PC-3 (cell line): ENCODE measurements at regions of chr2 and their contacts with region 1.

Region 1: GRCh38 chr2:169012812-169013627 is 18.1 kb downstream of the ABCB11 start:
- DNase-seq: peak; percentile 56
- ATAC-seq: no peak
- H3K4me3 ChIP-seq: no peak overlapping the region
- H3K27ac ChIP-seq: peak overlapping the region; percentile 98
- H3K4me1 ChIP-seq: peaks cover 52% of the 10 kb centered on the region
- H3K27me3 ChIP-seq: no peaks in the 10 kb centered on the region
- CTCF ChIP-seq: no peak

Region 2: GRCh38 chr2:168968342-168968741 is 44.7 kb before region 1 on chr2:
- CTCF ChIA-PET with region 1: no interaction called
- POLR2A ChIA-PET with region 1: interaction called, 3 read pairs
- intact Hi-C with region 1: loop called (anchors 2 kb)
- DNase-seq: peak; percentile 74
- ATAC-seq: peak; percentile 93
- H3K4me3 ChIP-seq: no peak overlapping the region
- H3K27ac ChIP-seq: peak overlapping the region; percentile 42
- H3K4me1 ChIP-seq: peaks cover 35% of the 10 kb centered on the region
- H3K27me3 ChIP-seq: no peaks in the 10 kb centered on the region
- CTCF ChIP-seq: no peak

Region 3: GRCh38 chr2:169038338-169038757 is 25.3 kb after region 1 on chr2:
- CTCF ChIA-PET with region 1: no interaction called
- POLR2A ChIA-PET with region 1: no interaction called
- intact Hi-C with region 1: loop called (anchors 1 kb)
- DNase-seq: peak; percentile 90
- ATAC-seq: peak; percentile 76
- H3K4me3 ChIP-seq: no peak overlapping the region
- H3K27ac ChIP-seq: peak overlapping the region; percentile 77
- H3K4me1 ChIP-seq: peaks cover 31% of the 10 kb centered on the region
- H3K27me3 ChIP-seq: no peaks in the 10 kb centered on the region
- CTCF ChIP-seq: no peak

Region 4: DNA sequence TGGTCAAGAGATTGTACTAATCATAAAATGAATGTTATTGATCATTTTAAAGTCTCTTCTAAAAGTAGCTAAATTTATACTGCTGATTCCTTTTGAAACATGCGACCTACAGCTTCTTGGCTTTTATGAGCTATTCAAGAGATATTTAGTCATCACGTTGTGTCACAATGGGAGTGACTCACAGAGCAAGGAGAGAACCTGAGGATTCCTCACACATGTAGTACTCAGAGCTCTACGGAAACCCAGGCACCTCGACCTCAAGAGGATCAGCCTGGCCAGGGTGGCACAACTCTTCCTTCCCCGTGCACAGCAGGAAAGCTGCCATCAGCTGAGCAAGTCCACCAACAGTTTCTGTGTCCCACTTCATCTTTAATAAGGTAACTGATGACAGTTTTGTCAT is 56.3 kb after region 1 on chr2 and contains the start of gene DHRS9:
- CTCF ChIA-PET with region 1: no interaction called
- POLR2A ChIA-PET with region 1: no interaction called
- intact Hi-C with region 1: loop called (anchors 5 kb)
- DNase-seq: peak; percentile 97
- ATAC-seq: peak; percentile 97
- H3K4me3 ChIP-seq: no peak within 1 kb of the TSS
- H3K27ac ChIP-seq: peak within 1 kb of the TSS; percentile 65
- H3K4me1 ChIP-seq: peaks cover 44% of the 10 kb centered on the region
- H3K27me3 ChIP-seq: no peaks in the 10 kb centered on the region
- CTCF ChIP-seq: no peak
- total RNA-seq, gene DHRS9: 0.22 TPM in 1 of 2 replicates, not detected in the other

Region 5: DNA sequence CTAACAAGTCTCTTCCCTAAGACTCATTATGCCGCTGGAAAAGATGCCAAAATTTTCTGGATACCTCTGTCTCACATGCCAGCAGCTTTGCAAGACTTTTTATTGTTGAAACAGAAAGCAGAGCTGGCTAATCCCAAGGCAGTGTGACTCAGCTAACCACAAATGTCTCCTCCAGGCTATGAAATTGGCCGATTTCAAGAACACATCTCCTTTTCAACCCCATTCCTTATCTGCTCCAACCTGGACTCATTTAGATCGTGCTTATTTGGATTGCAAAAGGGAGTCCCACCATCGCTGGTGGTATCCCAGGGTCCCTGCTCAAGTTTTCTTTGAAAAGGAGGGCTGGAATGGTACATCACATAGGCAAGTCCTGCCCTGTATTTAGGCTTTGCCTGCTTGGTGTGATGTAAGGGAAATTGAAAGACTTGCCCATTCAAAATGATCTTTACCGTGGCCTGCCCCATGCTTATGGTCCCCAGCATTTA is 82.6 kb after region 1 on chr2:
- CTCF ChIA-PET with region 1: no interaction called
- POLR2A ChIA-PET with region 1: no interaction called
- intact Hi-C with region 1: loop called (anchors 2 kb)
- DNase-seq: peak; percentile 99
- ATAC-seq: peak; percentile 93
- H3K4me3 ChIP-seq: peak overlapping the region; percentile 25; the same call in 1 of the 2 replicates
- H3K27ac ChIP-seq: peak overlapping the region; percentile 60
- H3K4me1 ChIP-seq: peaks cover 42% of the 10 kb centered on the region
- H3K27me3 ChIP-seq: no peaks in the 10 kb centered on the region
- CTCF ChIP-seq: no peak

Region 6: GRCh38 chr2:169210917-169211316 is 197.9 kb after region 1 on chr2:
- CTCF ChIA-PET with region 1: no interaction called
- POLR2A ChIA-PET with region 1: no interaction called
- intact Hi-C with region 1: no loop called
- DNase-seq: no peak
- ATAC-seq: no peak
- H3K4me3 ChIP-seq: no peak overlapping the region
- H3K27ac ChIP-seq: no peak overlapping the region
- H3K4me1 ChIP-seq: no peaks in the 10 kb centered on the region
- H3K27me3 ChIP-seq: peaks cover 28% of the 10 kb centered on the region
- CTCF ChIP-seq: no peak